ENCODE measurements at regions of chr5 and their contacts with region 1.

Region 1: DNA sequence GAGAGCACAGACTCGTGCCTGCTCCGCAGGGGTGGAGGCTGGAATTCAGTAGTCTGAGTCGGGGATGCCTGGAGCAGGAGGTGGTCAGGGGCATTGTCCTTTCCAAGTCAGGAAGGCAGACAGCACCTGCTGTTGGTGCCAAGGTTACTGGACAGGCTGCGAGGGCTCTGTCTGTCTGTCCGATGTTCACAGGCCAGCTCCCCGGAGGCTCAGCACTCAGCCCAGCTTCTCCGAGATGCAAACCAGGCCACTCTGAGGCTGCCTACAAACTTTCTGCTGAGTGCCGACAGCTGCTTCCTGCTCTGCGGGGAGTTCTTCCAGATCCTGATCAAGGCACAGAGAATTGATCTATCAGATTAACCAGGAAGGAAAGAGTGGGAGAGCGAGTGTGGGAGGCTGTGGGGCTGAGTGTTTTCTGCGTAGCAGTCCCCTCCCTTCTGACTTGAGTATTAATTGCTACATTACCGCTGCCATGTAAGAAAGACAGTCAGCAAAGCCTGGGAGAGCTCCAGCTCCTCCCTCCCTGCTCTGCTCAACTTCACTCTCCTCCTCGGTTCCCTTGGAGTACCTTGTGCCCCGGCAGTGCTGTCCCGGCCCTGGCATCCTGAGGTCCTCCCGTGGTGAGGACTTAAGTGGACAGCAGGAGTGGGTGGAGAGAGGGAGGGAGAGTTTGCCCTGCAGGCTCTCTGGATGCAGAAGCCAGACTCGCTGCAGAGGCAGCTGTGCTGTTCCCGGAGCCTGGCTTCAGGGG is 36.0 kb downstream of the KCNMB1 start:
- DNase-seq: no peak
- H3K4me3 ChIP-seq: peak overlapping the region in 1 of 3 experiments; percentile 33
- H3K4me3 Mint-ChIP-seq: peak overlapping the region; percentile 17 to 82
- H3K27ac ChIP-seq: no peak overlapping the region
- H3K27ac Mint-ChIP-seq: peak overlapping the region; percentile 30 to 66 (median 43)
- H3K4me1 ChIP-seq: peaks cover 47 to 49% of the 10 kb centered on the region in 2 donors
- H3K4me1 Mint-ChIP-seq: peaks cover 61% of the 10 kb centered on the region
- H3K27me3 ChIP-seq: no peaks in the 10 kb centered on the region
- H3K27me3 Mint-ChIP-seq: peaks cover 0 to 2% (median 1%) of the 10 kb centered on the region in 3 donors
- CTCF ChIP-seq: no peak

Region 2: DNA sequence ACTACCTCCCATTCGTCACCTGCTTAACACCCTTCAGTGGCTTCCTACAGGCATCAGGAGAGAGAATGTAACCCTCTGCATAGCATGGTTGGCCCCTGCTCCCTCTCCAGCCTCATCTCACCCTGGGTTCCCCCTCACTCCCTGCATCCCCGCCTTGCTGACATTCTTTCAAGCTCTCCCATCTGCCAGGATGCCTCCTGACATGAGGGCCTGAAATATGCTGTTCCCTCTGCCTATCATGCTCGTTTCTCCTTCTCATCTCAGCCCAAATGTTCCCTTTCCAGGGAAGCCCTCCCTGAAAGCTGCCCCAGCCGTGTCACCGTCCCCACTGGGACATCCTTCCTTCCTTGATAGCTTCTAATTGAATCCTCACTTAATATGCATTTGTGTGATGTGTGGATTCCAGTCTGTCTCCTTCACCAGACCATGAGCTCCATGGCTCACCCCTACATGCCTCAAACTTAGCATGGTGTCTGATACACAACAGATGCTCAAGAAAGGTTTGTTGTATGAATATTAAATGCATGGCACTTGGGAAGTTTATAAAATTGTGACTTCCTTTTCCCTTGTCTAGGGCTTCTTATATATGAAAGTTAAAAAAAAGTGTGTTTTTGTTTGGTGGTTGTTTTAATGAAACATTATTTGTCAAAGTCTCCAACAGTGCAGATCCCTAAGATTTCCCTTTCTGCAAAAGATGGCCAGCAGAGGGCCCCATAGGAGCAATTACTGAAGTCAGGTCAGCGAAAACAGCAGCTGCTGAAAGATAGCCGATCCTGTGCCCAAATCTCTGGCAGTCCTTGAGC is 127.7 kb before region 1 on chr5:
- intact Hi-C with region 1: no loop called
- DNase-seq: peak; percentile 39 to 59 (median 55)
- H3K4me3 ChIP-seq: no peak overlapping the region
- H3K4me3 Mint-ChIP-seq: no peak overlapping the region
- H3K27ac ChIP-seq: no peak overlapping the region
- H3K27ac Mint-ChIP-seq: no peak overlapping the region
- H3K4me1 ChIP-seq: no peaks in the 10 kb centered on the region
- H3K4me1 Mint-ChIP-seq: peaks cover 3% of the 10 kb centered on the region
- H3K27me3 ChIP-seq: no peaks in the 10 kb centered on the region
- H3K27me3 Mint-ChIP-seq: peaks cover 0 to 3% (median 0%) of the 10 kb centered on the region in 3 donors
- CTCF ChIP-seq: peak; percentile 77

Region 3: GRCh38 chr5:170388818-170389549 is 35.8 kb after region 1 on chr5 and contains the start of gene KCNMB1:
- intact Hi-C with region 1: loop called in 1 of 2 experiments (anchors 5 kb)
- DNase-seq: peak; percentile 9 to 32 (median 16)
- H3K4me3 ChIP-seq: peak within 1 kb of the TSS; percentile 58 to 86 (median 61)
- H3K4me3 Mint-ChIP-seq: peak within 1 kb of the TSS; percentile 91 to 97
- H3K27ac ChIP-seq: peak within 1 kb of the TSS; percentile 79 to 90
- H3K27ac Mint-ChIP-seq: peak within 1 kb of the TSS; percentile 92 to 97 (median 93)
- H3K4me1 ChIP-seq: peaks cover 43 to 57% of the 10 kb centered on the region in 2 donors
- H3K4me1 Mint-ChIP-seq: peaks cover 57% of the 10 kb centered on the region
- H3K27me3 ChIP-seq: no peaks in the 10 kb centered on the region
- H3K27me3 Mint-ChIP-seq: no peaks in the 10 kb centered on the region
- CTCF ChIP-seq: no peak
- polyA plus RNA-seq, gene KCNMB1: 0.79 to 20.8 (median 1.2) TPM

Measured in CD14-positive monocyte (primary cell).